ENCODE measurements at regions of chr15 and their contacts with region 1.

Region 1: DNA sequence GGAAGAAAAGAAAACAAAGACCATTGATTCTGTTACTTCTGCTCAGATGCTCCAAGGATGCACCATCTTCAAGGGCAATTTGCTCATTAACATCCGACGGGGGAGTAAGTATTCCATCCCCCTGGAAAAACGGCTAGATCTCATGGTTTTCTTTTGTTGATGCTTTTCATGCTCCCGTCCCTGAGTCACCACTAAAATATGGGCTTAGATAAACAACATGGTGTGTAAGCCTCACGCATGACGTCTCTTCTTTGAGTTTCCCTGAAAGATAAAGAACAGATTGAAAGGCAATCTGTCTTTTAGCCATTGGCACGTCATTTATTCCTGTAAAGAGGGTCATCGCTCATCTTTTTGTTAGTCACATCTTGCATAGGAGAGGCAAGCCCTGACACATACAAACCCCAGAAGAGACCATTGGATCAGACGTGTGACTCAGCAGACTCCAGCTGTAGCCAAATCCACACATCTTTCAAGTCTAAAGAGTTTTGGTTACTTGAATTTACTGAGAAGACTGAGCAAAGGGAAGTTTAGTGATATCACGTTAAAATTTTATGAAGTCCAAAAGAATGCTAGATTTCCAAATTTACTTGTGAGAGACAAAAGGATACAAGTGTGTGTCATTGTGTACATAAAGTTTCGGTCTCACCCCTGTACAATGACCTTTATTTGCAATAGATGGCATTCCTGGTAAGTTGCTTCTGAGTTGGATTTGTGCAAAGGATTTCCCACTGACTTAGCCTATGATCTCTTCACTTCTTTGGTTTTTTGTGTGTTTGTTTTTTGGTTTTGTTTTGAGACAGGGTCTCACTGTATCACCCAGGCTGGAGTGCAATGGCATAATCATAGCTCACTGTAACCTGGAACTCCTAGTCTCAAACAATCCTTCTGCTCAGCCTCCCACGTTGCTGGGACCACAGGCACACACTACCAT is 110.5 kb downstream of the PGPEP1L start:
- DNase-seq: peak; percentile 98
- H3K4me3 Mint-ChIP-seq: peak overlapping the region; percentile 62
- H3K27ac Mint-ChIP-seq: peak overlapping the region; percentile 95
- H3K4me1 Mint-ChIP-seq: peaks cover 45% of the 10 kb centered on the region
- H3K27me3 Mint-ChIP-seq: no peaks in the 10 kb centered on the region
- CTCF ChIP-seq: no peak

Region 2: GRCh38 chr15:98865397-98866339 is 31.4 kb before region 1 on chr15:
- CTCF ChIA-PET with region 1: no interaction called
- POLR2A ChIA-PET with region 1: interaction called, 10 read pairs
- intact Hi-C with region 1: loop called (anchors 1 kb)
- DNase-seq: peak; percentile 84
- H3K4me3 Mint-ChIP-seq: peak overlapping the region; percentile 74
- H3K27ac Mint-ChIP-seq: peak overlapping the region; percentile 96
- H3K4me1 Mint-ChIP-seq: peaks cover 29% of the 10 kb centered on the region
- H3K27me3 Mint-ChIP-seq: no peaks in the 10 kb centered on the region
- CTCF ChIP-seq: no peak

Region 3: GRCh38 chr15:98881526-98882520 is 15.2 kb before region 1 on chr15:
- CTCF ChIA-PET with region 1: interaction called, 16 read pairs
- POLR2A ChIA-PET with region 1: interaction called, 10 read pairs
- intact Hi-C with region 1: no loop called
- DNase-seq: peak; percentile 75
- H3K4me3 Mint-ChIP-seq: no peak overlapping the region
- H3K27ac Mint-ChIP-seq: peak overlapping the region; percentile 59
- H3K4me1 Mint-ChIP-seq: peaks cover 20% of the 10 kb centered on the region
- H3K27me3 Mint-ChIP-seq: no peaks in the 10 kb centered on the region
- CTCF ChIP-seq: peak; percentile 53

Measured in MCF 10A (cell line).